Endothelial cell of umbilical vein (primary cell): ENCODE measurements at regions of chr17 and their contacts with region 1.

Region 1: GRCh38 chr17:41474863-41475262 is 6.1 kb downstream of the KRT35 start:
- DNase-seq: no peak
- H3K4me3 ChIP-seq: no peak overlapping the region
- H3K27ac ChIP-seq: no peak overlapping the region
- H3K4me1 ChIP-seq: no peaks in the 10 kb centered on the region
- H3K27me3 ChIP-seq: peaks cover 5% of the 10 kb centered on the region in 2 experiments
- CTCF ChIP-seq: no peak
- POLR2A ChIP-seq: no peak

Region 2: DNA sequence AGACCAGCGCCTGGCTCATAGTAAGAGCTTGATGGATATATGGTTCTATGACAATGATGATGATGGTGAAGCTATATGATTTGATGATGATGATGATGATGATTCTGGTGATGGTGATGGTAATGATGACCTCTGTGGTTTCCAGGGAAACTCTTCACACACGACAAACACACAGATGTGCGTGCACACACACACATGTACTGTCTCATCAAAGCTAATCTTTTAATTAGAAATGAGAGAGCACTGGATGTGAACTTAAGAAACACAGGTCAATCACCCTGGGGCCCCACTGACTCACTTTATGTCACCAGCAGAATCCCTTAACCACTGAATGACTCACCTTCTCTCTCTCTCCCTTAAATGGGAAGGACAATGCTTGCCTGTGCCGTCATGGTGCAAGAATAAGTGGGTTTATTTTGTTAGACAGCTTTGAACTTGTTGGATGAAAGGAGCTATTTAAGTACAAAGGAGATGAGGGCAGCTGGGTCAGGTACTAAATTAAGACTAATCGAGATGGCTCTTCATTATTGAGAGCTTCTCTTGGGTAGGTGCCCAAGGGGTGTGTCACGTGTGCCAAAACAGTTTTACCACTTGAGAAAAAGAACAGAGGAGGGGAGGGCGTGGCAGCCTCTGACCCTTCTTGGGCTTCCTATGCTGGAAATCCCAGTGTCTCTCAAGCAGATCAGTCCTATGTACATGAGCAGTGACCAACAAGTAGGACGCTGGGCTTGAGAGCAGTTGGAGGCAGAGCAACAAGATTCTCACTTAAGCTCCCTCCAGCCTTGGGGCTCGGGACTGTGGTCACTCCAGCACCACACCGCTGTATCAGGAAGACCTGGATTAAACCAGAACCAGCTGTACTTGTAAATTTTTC is 70.8 kb before region 1 on chr17:
- CTCF ChIA-PET with region 1: no interaction called
- POLR2A ChIA-PET with region 1: no interaction called
- dilution Hi-C with region 1: no loop called
- intact Hi-C with region 1: no loop called
- DNase-seq: peak; percentile 48
- H3K4me3 ChIP-seq: peak overlapping the region in 1 of 3 experiments; percentile 9
- H3K27ac ChIP-seq: peak overlapping the region; percentile 16
- H3K4me1 ChIP-seq: peaks cover 18% of the 10 kb centered on the region
- H3K27me3 ChIP-seq: peaks cover 8 to 12% of the 10 kb centered on the region in 2 experiments
- CTCF ChIP-seq: no peak
- POLR2A ChIP-seq: no peak

Region 3: DNA sequence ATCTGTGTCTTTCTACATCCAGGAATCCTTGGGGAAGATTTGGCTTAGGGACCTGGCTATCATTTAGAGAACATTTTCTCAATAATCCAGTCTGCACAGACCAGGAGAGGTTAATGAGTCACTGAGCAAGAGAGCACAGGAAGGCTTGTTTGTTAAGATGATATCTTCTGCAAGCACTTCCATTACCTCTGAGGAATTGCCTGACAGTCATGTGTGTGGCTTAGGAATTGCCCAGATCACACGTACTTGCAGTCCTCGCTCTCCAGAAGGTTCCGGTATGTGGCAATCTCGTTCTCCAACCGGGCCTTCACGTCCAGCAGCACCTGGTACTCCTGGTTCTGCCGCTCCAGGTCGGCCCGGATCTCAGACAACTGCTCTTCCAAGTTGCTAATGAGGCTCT is 53.7 kb before region 1 on chr17:
- CTCF ChIA-PET with region 1: no interaction called
- POLR2A ChIA-PET with region 1: no interaction called
- dilution Hi-C with region 1: no loop called
- intact Hi-C with region 1: loop called (anchors 10 kb)
- DNase-seq: no peak
- H3K4me3 ChIP-seq: no peak overlapping the region
- H3K27ac ChIP-seq: no peak overlapping the region
- H3K4me1 ChIP-seq: no peaks in the 10 kb centered on the region
- H3K27me3 ChIP-seq: peaks cover 0 to 2% of the 10 kb centered on the region in 2 experiments
- CTCF ChIP-seq: no peak
- POLR2A ChIP-seq: no peak

Region 4: DNA sequence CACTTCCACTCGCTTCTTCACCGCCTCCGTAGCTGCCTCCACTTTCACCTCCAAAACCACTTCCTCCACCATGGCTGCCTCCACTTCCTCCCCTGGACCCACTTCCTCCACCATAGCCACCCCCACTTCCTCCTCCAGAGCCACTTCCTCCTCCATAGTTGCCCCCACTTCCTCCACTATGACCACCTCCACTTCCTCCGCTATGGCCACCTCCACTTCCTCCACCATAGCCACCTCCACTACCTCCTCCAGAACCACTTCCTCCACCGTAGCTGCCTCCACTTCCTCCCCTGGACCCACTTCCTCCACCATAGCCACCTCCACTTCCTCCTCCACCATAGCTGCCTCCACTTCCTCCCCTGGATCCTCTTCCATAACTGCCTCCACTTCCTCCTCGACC is 92.5 kb after region 1 on chr17:
- CTCF ChIA-PET with region 1: no interaction called
- POLR2A ChIA-PET with region 1: no interaction called
- dilution Hi-C with region 1: no loop called
- intact Hi-C with region 1: no loop called
- DNase-seq: no peak
- H3K4me3 ChIP-seq: no peak overlapping the region
- H3K27ac ChIP-seq: no peak overlapping the region
- H3K4me1 ChIP-seq: no peaks in the 10 kb centered on the region
- H3K27me3 ChIP-seq: peaks cover 18 to 24% of the 10 kb centered on the region in 2 experiments
- CTCF ChIP-seq: no peak
- POLR2A ChIP-seq: no peak

Region 5: GRCh38 chr17:41655611-41656351 is 180.9 kb after region 1 on chr17:
- CTCF ChIA-PET with region 1: no interaction called
- POLR2A ChIA-PET with region 1: no interaction called
- dilution Hi-C with region 1: no loop called
- intact Hi-C with region 1: no loop called
- DNase-seq: no peak
- H3K4me3 ChIP-seq: no peak overlapping the region
- H3K27ac ChIP-seq: no peak overlapping the region
- H3K4me1 ChIP-seq: no peaks in the 10 kb centered on the region
- H3K27me3 ChIP-seq: peaks cover 0 to 1% of the 10 kb centered on the region in 2 experiments
- CTCF ChIP-seq: no peak
- POLR2A ChIP-seq: no peak